Mammary epithelial cell (primary cell): ENCODE measurements at regions of chr4 and their contacts with region 1.

Region 1: DNA sequence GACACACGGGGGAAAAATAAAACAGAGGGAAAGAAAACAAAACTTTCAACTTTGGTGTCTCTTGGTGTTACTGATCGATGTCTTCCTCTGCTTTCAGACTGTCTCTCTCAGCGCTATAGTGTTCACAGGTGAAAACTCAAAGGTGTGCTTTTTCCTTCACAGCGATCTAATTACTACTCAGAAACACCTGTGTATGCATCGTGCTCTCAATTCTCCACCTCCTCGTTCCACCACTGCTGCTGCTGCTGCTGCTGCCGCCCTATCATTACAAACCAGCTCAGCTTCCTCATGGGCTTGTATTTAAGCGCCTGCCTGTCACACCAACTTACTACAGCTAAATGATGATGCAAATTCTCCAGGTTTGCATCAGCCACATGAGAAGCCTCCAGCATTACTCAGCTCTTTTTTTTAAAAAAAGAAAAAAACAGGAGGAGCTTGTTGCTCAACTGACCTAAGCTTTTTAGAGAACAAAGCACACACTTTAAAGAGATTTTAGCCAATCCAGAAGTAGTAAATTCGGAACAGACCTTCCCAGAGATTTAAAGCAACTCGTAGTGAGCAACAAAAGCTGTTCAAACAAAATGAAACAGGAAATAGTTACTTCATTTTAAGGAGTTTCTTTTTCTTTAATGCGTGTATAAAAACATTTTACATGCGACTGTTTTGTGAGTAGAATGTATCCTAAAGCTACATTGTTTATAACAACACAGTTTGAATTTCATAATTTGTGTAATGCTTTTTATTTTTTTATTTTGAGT is at the start of gene SLC7A11:
- DNase-seq: peak; percentile 98
- H3K4me3 ChIP-seq: peak within 1 kb of the TSS; percentile 71 to 94 (median 86)
- H3K27ac ChIP-seq: peak within 1 kb of the TSS; percentile 100
- H3K4me1 ChIP-seq: peaks cover 11% of the 10 kb centered on the region
- H3K27me3 ChIP-seq: no peaks in the 10 kb centered on the region
- CTCF ChIP-seq: peak in 1 of 2 donors; percentile 18
- total RNA-seq, gene SLC7A11: 80.2 to 248 TPM

Region 2: DNA sequence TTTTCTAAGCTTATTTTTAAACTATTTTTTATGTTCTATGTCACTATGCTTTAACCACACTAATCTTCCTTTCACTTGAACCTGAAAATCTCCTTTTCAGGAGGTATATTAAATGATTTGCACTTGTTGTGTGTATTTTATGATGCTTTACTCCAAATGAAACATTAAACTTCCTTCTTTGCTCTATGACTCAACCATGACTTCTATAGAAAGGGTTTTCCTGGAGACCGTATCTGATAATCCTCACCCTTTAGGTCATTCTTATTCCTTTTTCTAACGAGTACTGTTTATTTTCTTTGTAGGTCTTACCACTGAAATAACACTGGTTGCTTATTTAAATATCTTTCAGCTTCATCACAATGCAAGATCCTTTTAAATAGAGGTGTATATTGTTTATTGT is 1873.2 kb before region 1 on chr4:
- CTCF ChIA-PET with region 1: no interaction called
- dilution Hi-C with region 1: no loop called
- in situ Hi-C with region 1: no loop called
- intact Hi-C with region 1: no loop called
- DNase-seq: no peak
- H3K4me3 ChIP-seq: no peak overlapping the region
- H3K27ac ChIP-seq: no peak overlapping the region
- H3K4me1 ChIP-seq: no peaks in the 10 kb centered on the region
- H3K27me3 ChIP-seq: no peaks in the 10 kb centered on the region
- CTCF ChIP-seq: no peak

Region 3: DNA sequence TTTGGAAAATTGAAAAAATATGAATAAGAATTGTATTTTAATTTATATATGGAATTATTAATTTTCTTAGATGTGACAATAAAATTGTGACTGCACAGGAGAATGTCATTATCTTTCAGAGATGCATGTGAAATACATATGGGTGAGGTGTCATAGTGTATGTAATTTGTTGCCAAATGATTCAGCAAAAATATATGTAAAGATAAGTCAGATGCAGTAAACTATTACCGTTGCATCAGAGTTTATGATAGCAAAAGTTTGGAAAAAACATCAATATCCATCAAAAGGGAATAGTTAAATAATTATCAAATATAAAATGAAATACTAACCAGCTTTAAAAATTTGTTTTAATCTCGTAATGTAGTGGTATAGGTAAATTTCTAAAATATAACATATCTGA is 10.3 kb after region 1 on chr4:
- CTCF ChIA-PET with region 1: no interaction called
- dilution Hi-C with region 1: no loop called
- in situ Hi-C with region 1: no loop called
- intact Hi-C with region 1: loop called (anchors 1 kb)
- DNase-seq: no peak
- H3K4me3 ChIP-seq: no peak overlapping the region
- H3K27ac ChIP-seq: no peak overlapping the region
- H3K4me1 ChIP-seq: no peaks in the 10 kb centered on the region
- H3K27me3 ChIP-seq: no peaks in the 10 kb centered on the region
- CTCF ChIP-seq: no peak

Region 4: DNA sequence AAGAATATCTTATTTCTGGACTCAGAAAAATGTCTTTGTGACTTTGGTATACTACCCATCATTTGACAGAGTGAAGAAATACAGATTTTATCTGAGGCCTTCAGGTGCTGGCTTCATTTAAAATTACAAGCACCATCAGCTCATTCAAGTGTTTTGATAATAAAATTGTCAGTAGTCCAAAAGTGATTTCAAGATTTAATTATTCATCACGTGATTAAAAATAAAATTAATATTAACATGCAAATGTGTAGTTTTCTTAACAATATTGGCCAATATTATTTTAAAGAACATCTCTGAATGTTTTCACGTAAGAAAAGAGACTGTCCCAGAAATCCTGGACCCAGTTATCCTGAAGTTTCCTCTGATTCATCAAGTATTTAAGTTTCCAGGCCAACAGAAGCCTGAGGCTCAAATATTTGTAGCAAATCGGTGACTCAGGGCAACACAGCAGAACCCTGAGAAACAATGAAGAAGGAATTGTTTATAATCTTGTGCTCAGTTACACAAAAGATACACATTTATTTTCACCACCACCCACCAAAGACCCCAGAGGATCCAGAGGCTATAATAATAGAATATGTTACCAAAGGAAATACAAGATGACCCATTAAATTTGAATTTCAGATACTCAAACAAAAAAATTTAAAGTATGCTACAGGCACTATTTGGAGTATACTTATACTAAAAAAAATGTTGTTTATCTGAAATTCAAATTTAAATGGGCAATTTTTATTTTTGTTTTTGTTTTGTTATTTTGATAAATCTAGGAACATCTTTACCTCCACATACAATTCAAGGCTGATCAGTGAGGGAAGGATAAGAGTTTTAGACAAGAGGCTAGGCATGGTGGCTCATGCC is 33.7 kb after region 1 on chr4:
- CTCF ChIA-PET with region 1: no interaction called
- dilution Hi-C with region 1: loop called (anchors 5 kb)
- in situ Hi-C with region 1: no loop called
- intact Hi-C with region 1: loop called (anchors 1 kb)
- DNase-seq: peak; percentile 81
- H3K4me3 ChIP-seq: no peak overlapping the region
- H3K27ac ChIP-seq: peak overlapping the region; percentile 98
- H3K4me1 ChIP-seq: peaks cover 14% of the 10 kb centered on the region
- H3K27me3 ChIP-seq: no peaks in the 10 kb centered on the region
- CTCF ChIP-seq: no peak

Region 5: GRCh38 chr4:138341739-138342415 is 99.6 kb after region 1 on chr4:
- CTCF ChIA-PET with region 1: no interaction called
- dilution Hi-C with region 1: no loop called
- in situ Hi-C with region 1: no loop called
- intact Hi-C with region 1: no loop called
- DNase-seq: no peak
- H3K4me3 ChIP-seq: no peak overlapping the region
- H3K27ac ChIP-seq: no peak overlapping the region
- H3K4me1 ChIP-seq: peaks cover 8% of the 10 kb centered on the region
- H3K27me3 ChIP-seq: no peaks in the 10 kb centered on the region
- CTCF ChIP-seq: no peak

Region 6: DNA sequence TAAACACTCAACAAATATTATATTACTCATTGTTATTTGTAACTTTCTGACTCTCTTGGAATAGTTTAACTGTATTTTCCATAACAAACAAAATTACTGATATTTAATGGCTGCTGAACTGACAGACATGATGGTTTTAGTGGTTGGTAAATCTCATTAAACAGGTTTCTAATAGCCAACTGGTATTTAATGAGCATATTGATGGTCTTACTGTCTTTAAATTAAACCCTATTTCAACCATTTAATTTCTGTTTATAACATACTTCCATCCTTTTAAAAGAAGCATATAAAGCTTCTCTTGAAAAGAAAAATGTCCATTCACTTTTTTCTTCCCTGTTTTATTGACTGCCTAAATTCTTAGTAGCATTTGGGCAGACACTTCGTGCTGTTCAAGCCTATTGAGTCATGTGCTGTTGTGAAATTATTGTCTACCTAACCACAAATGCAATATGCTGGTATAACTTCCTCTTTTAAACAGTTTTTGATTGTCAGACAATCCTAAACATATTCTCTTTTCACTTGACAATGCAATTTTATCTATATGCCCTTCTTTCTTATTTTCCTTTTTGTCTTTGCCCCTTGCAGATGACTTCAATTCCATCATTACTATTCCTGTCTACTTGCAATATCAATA is 163.8 kb after region 1 on chr4:
- CTCF ChIA-PET with region 1: no interaction called
- dilution Hi-C with region 1: no loop called
- in situ Hi-C with region 1: loop called in 1 of 2 experiments (anchors 25 kb)
- intact Hi-C with region 1: loop called (anchors 1 kb)
- DNase-seq: peak; percentile 71
- H3K4me3 ChIP-seq: peak overlapping the region in 1 of 3 experiments; percentile 13
- H3K27ac ChIP-seq: peak overlapping the region; percentile 32
- H3K4me1 ChIP-seq: peaks cover 31% of the 10 kb centered on the region
- H3K27me3 ChIP-seq: no peaks in the 10 kb centered on the region
- CTCF ChIP-seq: no peak

Region 7: GRCh38 chr4:138522366-138522765 is 280.1 kb after region 1 on chr4:
- CTCF ChIA-PET with region 1: interaction called, 3 read pairs
- dilution Hi-C with region 1: no loop called
- in situ Hi-C with region 1: loop called (anchors 10 to 25 kb)
- intact Hi-C with region 1: loop called (anchors 1 kb)
- DNase-seq: peak; percentile 30
- H3K4me3 ChIP-seq: no peak overlapping the region
- H3K27ac ChIP-seq: no peak overlapping the region
- H3K4me1 ChIP-seq: no peaks in the 10 kb centered on the region
- H3K27me3 ChIP-seq: no peaks in the 10 kb centered on the region
- CTCF ChIP-seq: peak; percentile 44 to 73